CD4-positive, alpha-beta memory T cell (primary cell): ENCODE measurements at regions of chrX and their contacts with region 1.

Region 1: GRCh38 chrX:46398126-46398525 is 147.1 kb downstream of the ZNF674 start:
- DNase-seq: no peak
- H3K4me3 ChIP-seq: no peak overlapping the region
- H3K4me3 Mint-ChIP-seq: no peak overlapping the region
- H3K27ac ChIP-seq: no peak overlapping the region
- H3K27ac Mint-ChIP-seq: no peak overlapping the region
- H3K4me1 ChIP-seq: no peaks in the 10 kb centered on the region
- H3K4me1 Mint-ChIP-seq: no peaks in the 10 kb centered on the region
- H3K27me3 ChIP-seq: no peaks in the 10 kb centered on the region
- H3K27me3 Mint-ChIP-seq: no peaks in the 10 kb centered on the region

Region 2: GRCh38 chrX:46408553-46409407 is 10.7 kb after region 1 on chrX:
- CTCF ChIA-PET with region 1: interaction called, 13 read pairs
- POLR2A ChIA-PET with region 1: no interaction called
- intact Hi-C with region 1: no loop called
- DNase-seq: peak; percentile 44 to 55 (median 45)
- H3K4me3 ChIP-seq: no peak overlapping the region
- H3K4me3 Mint-ChIP-seq: no peak overlapping the region
- H3K27ac ChIP-seq: no peak overlapping the region
- H3K27ac Mint-ChIP-seq: no peak overlapping the region
- H3K4me1 ChIP-seq: no peaks in the 10 kb centered on the region
- H3K4me1 Mint-ChIP-seq: peaks cover 0 to 4% (median 0%) of the 10 kb centered on the region in 4 donors
- H3K27me3 ChIP-seq: no peaks in the 10 kb centered on the region
- H3K27me3 Mint-ChIP-seq: no peaks in the 10 kb centered on the region